Left lung (tissue), 14 donors: ENCODE measurements at regions of chr16 and their contacts with region 1.

Region 1: DNA sequence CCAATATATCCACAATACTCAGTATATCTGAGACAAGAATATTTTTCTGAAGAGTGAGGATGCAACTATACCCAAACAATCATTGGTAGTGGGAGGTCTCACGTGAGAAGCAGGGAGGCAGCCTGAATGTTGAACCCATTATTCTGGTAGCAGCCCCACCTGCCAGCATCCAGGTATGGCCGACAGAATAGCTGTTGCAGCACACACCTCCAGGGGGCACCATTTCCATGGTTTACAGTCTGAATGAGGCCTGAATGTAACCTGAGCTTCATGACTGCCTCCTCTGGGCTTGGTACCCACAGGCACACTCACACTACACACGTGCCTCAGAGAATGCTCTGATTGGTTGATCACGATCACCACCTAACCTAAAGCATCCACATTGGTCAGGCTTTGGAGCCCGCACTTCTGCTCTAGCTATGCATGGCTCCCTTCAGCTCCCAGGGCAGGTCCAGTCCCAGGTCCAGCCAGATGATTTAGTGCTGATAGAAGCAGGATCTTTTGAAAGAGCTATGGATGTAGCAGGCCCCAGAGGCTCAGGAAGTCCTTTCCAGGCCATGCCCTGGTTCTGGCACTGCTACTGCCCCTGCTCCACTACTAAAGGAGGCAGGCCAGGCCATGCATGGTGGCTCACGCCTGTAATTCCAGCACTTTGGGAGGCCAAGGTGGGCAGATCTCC is 11.0 kb upstream of the CBFB start:
- DNase-seq: peak in 3 of 4 donors; percentile 18 to 77 (median 72)
- ATAC-seq: peak; percentile 94
- H3K4me3 ChIP-seq: no peak overlapping the region
- H3K27ac ChIP-seq: no peak overlapping the region
- H3K4me1 ChIP-seq: peaks cover 5 to 17% of the 10 kb centered on the region in 2 donors
- H3K27me3 ChIP-seq: peaks cover 0 to 27% of the 10 kb centered on the region in 2 donors
- CTCF ChIP-seq: peak; percentile 46 to 83

Region 2: DNA sequence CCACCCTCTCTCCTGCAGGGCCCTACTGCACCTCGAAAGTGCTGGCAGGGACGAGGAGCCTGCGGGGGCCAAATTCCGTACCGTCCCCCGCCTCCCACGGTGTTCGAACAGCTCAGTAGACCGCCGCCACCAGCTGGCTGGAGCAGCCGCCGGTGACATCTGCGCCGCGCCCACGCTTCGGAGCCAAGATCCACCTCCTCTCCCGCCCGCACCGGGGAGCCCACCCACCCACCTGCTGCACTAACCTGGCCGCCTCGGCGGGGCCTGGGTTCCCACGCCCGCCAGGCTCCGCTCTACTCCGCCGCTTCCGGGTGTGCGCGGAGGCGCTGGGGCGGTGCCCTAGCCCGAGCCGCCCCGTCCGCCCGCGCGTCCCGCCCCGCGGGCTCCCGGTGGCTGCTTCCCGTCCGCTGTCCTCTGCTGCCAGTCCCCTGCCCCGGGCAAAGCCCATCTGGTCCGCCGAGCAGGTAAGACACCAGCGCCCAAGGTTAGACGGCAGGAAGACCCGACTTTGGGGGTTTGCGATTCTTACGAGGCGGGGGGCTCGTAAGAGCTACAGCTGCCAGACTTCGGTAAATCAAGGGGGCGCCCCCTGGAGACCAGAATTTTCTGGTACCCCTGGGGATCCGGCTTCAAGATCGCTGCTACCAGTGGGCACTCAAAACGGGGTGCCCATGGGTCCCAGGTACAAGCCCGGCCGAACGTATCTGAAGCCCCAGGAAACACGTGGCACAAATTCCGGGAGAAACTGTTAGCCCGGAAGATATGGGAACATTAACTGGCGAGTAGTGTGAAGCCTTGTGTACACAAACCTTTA is 141.9 kb after region 1 on chr16 and contains the starts of genes FBXL8 and TRADD:
- intact Hi-C with region 1: loop called in 1 of 2 experiments (anchors 10 kb)
- DNase-seq: peak in 3 of 4 donors; percentile 70 to 96 (median 80)
- ATAC-seq: peak; percentile 80
- H3K4me3 ChIP-seq: peak within 1 kb of the TSS; percentile 96 to 97
- H3K27ac ChIP-seq: peak within 1 kb of the TSS; percentile 81 to 85
- H3K4me1 ChIP-seq: peaks cover 34 to 71% of the 10 kb centered on the region in 2 donors
- H3K27me3 ChIP-seq: peaks cover 8 to 47% of the 10 kb centered on the region in 2 donors
- CTCF ChIP-seq: no peak
- polyA plus RNA-seq, gene FBXL8: 1.8 to 4.1 (median 3.2) TPM
- polyA plus RNA-seq, gene TRADD: 5.8 to 8.6 (median 7.8) TPM